AG04450 (cell line): ENCODE measurements at regions of chr11 and their contacts with region 1.

Region 1: DNA sequence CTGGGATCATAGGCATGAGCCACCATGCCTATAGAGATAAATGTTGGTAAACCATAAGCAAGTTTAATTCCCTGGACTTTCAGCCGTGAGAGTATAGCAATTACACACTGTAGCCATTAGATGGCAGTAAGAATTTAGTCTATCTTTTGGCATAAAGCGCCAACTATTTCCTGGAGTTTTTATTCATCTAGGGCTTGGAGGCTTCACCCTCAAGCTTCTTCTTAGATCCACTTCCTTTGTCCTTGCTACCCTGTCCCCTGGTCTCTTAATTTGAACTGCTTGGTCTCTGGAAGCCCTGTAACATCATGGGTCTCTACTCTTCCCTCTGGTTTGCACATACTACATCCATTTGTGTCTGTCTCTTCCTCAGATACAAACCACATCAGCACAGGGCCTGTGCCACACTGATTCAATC is 38.2 kb downstream of the OR10A6 start:
- DNase-seq: peak; percentile 50
- H3K4me3 ChIP-seq: no peak overlapping the region
- H3K27ac ChIP-seq: peak overlapping the region; percentile 42
- H3K27me3 ChIP-seq: no peaks in the 10 kb centered on the region
- CTCF ChIP-seq: peak; percentile 72

Region 2: DNA sequence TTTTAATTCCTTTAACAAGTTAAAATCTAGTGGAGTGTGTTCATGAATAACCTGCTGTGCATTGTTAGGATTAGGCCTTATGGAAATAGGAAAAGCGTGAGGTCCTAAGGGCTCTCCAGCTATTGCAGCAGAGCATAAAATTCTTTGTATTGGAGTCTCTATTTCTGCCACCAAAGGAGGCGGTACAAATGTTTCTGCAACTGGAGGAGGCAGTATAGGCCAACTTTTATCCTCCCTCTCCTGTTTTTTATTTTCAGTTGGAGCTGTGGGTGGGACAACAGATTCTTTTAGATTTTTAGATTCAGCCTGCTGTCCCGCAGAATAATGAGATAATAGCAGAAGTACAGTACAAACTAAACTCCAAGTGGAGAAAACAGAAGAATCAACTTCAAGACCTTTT is 12.1 kb after region 1 on chr11:
- CTCF ChIA-PET with region 1: interaction called, 43 read pairs
- POLR2A ChIA-PET with region 1: no interaction called
- DNase-seq: peak; percentile 37
- H3K4me3 ChIP-seq: no peak overlapping the region
- H3K27ac ChIP-seq: peak overlapping the region; percentile 31
- H3K27me3 ChIP-seq: no peaks in the 10 kb centered on the region
- CTCF ChIP-seq: peak; percentile 61

Region 3: DNA sequence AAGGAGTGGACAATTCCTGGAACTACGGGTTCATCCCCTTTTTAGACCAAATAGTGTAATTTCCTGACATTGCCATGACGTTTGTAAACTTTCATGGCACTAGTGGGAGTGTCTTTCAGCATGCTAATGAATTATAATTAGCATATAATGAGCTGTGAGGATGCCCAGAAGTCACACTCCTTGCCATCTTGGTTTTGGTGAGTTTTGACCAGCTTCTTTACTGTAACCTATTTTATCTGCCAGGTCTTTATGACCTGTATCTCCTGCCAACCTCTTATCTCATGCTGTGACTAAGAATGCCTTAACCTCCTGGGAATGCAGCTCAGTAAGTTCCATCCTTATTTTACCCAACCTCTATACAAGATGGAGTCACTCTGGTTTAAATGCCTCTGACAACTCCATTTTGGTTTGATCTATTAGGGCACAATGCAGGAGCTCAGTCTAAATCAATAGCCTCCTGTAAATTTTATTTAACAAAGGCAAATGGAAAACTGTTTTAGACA is 17.5 kb after region 1 on chr11:
- CTCF ChIA-PET with region 1: interaction called, 43 read pairs
- POLR2A ChIA-PET with region 1: no interaction called
- DNase-seq: no peak
- H3K4me3 ChIP-seq: no peak overlapping the region
- H3K27ac ChIP-seq: no peak overlapping the region
- H3K27me3 ChIP-seq: no peaks in the 10 kb centered on the region
- CTCF ChIP-seq: no peak

Region 4: GRCh38 chr11:7924536-7924935 is 31.7 kb after region 1 on chr11:
- CTCF ChIA-PET with region 1: interaction called, 11 read pairs
- POLR2A ChIA-PET with region 1: no interaction called
- DNase-seq: peak; percentile 8
- H3K4me3 ChIP-seq: no peak overlapping the region
- H3K27ac ChIP-seq: peak overlapping the region; percentile 21
- H3K27me3 ChIP-seq: no peaks in the 10 kb centered on the region
- CTCF ChIP-seq: no peak

Region 5: DNA sequence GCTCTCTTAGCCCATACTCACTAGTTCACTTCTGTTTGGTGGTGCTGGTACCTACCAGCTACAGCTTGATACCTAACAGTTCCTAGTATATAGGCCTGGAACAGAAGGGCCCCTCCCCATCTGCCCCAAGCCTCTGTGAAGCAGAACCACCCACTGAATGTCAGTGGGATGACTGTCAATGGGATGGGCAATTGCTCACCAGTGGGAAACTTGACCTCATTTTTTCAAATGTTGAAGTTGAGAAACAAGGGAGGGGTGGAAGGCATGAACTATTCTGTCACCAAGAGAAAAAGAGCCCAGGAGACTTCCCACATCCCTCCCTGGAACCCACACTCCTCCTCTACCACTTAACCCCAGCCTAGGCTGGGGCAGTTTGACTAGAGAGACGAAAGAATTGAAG is 72.5 kb after region 1 on chr11 and contains the start of gene NLRP10:
- CTCF ChIA-PET with region 1: interaction called, 18 read pairs
- POLR2A ChIA-PET with region 1: interaction called, 3 read pairs
- DNase-seq: peak; percentile 67
- H3K4me3 ChIP-seq: peak within 1 kb of the TSS; percentile 17; the same call in 1 of the 2 replicates
- H3K27ac ChIP-seq: peak within 1 kb of the TSS; percentile 98
- H3K27me3 ChIP-seq: no peaks in the 10 kb centered on the region
- CTCF ChIP-seq: no peak
- polyA plus RNA-seq, gene NLRP10: 2.4 and 2.8 TPM in 2 replicates

Region 6: DNA sequence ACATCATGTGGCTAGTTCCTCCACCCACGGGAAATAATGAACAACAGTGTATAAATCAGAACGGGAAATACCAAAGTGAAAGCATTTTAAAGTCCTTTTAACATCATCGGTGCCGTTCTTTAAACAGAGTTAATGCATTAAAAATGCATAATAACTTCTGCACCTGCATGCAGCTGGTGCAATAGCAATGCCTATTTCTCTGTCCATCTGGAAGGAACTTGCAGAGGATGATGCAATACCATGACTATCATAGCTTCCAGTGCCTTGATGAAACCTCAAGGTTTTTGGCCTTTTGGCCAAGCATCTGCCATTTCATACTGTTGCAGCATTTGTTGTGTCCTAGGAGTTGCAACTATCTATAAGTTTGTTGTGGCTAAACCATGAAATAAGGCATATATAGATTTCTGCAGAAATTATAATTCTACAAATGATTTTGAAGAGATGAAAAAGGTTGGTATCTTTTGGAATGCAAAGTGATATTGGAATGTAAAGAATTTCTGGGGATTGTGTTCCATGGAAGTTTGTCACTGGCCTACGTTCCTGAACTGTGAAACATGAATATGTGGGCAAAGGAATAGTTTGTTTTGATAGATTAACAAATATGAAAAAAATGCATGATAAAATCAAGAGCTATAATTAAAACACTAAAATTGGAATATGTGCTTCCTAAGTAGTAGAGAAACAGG is 84.5 kb after region 1 on chr11:
- CTCF ChIA-PET with region 1: interaction called, 24 read pairs
- POLR2A ChIA-PET with region 1: no interaction called
- DNase-seq: peak; percentile 77
- H3K4me3 ChIP-seq: no peak overlapping the region; the same call in 1 of the 2 replicates
- H3K27ac ChIP-seq: peak overlapping the region; percentile 82
- H3K27me3 ChIP-seq: no peaks in the 10 kb centered on the region
- CTCF ChIP-seq: no peak